PC-9 (cell line): ENCODE measurements at regions of chr11 and their contacts with region 1.

Region 1: DNA sequence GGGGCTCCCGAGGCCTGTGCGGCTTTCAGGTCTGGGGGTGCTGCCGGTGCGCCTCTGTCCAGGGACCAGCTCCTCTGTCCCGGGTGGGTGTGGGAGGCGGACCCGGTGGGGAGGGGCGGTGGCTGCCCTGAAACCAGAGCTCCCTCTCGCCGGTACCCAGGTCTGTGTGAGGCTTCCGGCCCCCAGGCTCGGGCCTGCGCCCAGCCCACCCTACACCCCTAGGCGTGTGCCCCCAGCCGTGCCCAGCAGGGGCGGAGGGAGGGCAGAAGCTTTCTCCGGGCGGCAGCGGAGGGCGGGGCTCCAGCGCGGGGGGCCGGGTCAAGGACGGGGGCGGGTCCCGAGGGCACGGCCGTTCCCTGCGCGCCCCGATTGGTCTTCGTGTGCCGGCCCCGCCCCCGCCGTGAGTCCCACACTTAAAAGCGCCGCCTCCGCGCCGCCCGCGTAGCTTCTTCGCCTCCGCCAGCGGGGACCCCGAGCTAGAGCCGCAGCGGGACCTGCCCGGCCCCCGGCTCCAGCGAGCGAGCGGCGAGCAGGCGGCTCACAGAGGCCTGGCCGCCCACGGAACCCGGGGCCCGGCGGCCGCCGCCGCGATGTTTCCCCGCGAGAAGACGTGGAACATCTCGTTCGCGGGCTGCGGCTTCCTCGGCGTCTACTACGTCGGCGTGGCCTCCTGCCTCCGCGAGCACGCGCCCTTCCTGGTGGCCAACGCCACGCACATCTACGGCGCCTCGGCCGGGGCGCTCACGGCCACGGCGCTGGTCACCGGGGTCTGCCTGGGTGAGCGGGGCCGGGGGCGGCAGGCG is 616 bp downstream of the PNPLA2 start:
- DNase-seq: peak; percentile 65 to 87
- H3K4me3 ChIP-seq: peak overlapping the region; percentile 84
- H3K27ac ChIP-seq: peak overlapping the region; percentile 87
- H3K4me1 ChIP-seq: peaks cover 12% of the 10 kb centered on the region
- H3K27me3 ChIP-seq: no peaks in the 10 kb centered on the region
- CTCF ChIP-seq: no peak

Region 2: DNA sequence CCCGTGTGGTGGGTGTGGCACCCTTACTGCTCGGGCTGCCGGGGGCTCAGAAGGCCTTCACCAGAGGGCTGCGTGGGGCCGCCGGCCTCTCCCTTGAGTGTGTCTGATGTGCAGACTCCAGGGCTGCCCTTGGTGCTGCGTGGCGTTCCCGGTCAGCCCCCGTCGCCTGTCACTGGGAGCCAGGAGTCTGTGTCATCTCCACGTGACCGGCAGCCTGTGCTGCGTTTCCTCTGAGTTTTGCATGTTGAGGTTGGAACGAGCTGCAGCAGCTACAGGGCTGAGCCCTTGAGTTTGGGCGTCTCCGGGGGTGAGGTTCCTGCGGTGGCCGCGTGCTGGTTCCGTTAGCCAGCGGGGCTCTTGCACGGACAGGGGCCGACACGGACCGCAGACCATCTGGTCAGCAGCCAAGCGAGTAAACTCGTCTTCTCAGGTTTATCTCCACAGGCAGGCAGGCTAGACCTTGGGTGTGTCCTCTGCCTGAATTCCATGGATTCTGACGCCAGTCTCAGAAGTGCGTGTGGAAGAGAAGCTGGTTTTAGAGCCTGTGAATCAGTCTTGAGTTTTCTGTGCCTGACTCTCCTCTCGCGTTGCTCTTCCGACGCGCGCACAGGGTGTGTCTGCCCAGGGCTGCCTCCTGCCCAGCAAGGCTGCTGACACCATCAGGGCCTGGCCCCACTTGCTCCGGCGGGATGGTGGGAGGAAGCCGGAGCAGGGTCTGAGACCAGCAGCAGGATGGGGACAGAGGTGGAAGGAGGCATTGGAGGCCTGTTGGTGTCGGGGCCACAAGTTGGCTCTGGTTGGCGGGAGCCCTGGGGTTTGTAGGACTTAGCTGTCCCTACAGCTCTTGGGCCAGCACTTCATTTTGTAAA is 358.8 kb before region 1 on chr11:
- CTCF ChIA-PET with region 1: no interaction called
- POLR2A ChIA-PET with region 1: interaction called, 17 read pairs
- intact Hi-C with region 1: no loop called
- DNase-seq: peak; percentile 73 to 82
- H3K4me3 ChIP-seq: no peak overlapping the region
- H3K27ac ChIP-seq: peak overlapping the region; percentile 9; the same call in 1 of the 2 replicates
- H3K4me1 ChIP-seq: peaks cover 4% of the 10 kb centered on the region
- H3K27me3 ChIP-seq: no peaks in the 10 kb centered on the region
- CTCF ChIP-seq: no peak

Region 3: DNA sequence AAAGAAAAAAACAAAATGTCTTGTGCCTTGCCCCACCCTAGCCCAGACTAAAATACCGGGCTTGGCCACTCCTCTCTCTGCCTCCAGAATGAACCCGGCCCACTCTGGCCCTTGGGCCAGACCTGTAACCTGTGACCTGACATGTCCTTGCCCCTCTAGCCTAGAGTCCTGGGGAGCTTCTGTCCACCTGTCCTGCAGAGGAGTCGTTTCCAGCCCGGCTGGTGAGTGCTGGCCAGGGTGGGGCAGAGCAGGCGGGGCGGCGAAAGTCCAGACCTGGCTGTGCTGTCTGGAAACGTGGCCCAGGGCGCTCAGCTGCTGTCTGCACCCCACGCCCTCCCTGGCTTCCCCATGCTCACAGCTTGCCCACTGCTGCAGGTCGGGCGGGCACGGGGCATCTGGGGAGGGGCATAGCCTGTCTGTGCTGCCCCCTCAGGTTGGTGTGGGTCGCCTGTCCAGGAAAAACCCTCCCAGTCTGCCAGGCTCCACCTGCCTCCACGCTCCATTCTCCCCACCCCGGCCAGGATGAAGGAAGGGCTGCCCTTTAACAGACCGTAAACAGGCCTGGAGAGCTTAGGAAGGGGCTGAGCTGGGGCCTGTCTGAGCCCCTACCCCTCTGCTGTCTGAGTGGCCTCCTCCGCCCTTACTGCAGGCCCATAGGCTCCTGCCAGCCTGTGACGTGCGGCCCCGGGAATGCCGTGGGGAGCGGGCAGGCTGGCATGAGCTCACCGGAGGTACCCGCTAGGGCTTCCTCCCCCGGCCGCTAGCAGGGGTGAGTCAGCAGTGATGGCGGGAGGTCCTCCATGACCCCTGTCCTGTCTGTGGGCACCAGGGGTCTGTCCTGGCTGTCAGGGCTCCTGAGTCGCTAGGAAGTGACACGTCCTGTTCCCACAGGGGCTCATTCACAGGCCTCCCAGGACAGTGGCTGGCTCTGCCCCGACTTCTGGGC is 15.3 kb after region 1 on chr11:
- CTCF ChIA-PET with region 1: interaction called, 4 read pairs
- POLR2A ChIA-PET with region 1: interaction called, 13 read pairs
- intact Hi-C with region 1: loop called (anchors 2 kb)
- DNase-seq: peak; percentile 83 to 88
- H3K4me3 ChIP-seq: peak overlapping the region; percentile 67; the same call in 1 of the 2 replicates
- H3K27ac ChIP-seq: peak overlapping the region; percentile 78
- H3K4me1 ChIP-seq: peaks cover 15% of the 10 kb centered on the region
- H3K27me3 ChIP-seq: no peaks in the 10 kb centered on the region
- CTCF ChIP-seq: no peak

Region 4: GRCh38 chr11:1163911-1164735 is 344.8 kb after region 1 on chr11:
- CTCF ChIA-PET with region 1: no interaction called
- POLR2A ChIA-PET with region 1: no interaction called
- intact Hi-C with region 1: no loop called
- DNase-seq: no peak
- H3K4me3 ChIP-seq: no peak overlapping the region
- H3K27ac ChIP-seq: no peak overlapping the region
- H3K4me1 ChIP-seq: no peaks in the 10 kb centered on the region
- H3K27me3 ChIP-seq: no peaks in the 10 kb centered on the region
- CTCF ChIP-seq: no peak